Prostate gland (tissue), 2 donors: ENCODE measurements at regions of chr15 and their contacts with region 1.

Region 1: DNA sequence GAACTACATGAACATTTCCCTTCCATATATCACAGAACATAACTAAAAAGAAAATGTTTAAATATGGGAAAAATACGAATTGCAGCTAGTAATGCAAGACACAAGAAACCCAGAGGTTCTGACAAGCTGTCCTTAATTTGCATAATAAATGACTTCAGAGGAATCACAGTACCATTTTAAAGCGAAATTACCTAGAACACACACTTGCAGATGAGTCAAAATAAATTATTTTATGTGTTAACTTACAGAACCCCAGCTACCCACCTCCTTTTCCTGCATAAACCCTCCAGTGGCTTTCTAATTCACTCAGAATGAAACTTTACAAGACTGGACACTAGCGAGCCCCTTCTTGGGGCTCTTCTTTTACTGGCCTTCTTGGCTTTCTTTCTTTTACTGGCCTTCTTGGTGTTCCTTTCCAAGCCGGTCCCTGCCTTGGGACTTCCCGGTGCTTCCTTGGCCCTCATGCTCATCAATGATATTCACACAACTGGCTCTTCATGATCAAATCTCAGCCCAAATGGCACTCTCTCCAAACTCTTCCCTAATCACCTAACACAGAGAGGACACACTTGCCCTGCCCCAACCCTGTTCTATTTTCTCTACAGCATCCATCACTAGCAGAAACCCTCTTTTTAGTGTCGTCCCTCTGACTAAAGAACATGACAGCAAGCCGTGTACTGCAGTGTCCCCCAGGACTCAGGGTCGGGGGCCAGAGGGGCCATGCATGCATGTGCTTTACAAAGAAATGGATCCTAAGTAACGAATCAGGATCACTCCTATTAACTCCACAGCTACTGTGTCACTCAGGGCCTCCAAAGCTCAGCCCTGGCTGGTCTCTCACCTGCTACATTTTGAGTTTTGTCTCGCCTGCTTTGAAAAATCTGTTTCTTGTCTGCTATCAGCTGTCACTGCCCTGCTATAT is 4.8 kb downstream of the CHSY1 start:
- DNase-seq: no peak
- H3K4me3 ChIP-seq: no peak overlapping the region
- H3K27ac ChIP-seq: peak overlapping the region; percentile 49 to 64
- H3K4me1 ChIP-seq: peaks cover 37% of the 10 kb centered on the region
- H3K27me3 ChIP-seq: no peaks in the 10 kb centered on the region
- CTCF ChIP-seq: no peak
- POLR2A ChIP-seq: no peak

Region 2: DNA sequence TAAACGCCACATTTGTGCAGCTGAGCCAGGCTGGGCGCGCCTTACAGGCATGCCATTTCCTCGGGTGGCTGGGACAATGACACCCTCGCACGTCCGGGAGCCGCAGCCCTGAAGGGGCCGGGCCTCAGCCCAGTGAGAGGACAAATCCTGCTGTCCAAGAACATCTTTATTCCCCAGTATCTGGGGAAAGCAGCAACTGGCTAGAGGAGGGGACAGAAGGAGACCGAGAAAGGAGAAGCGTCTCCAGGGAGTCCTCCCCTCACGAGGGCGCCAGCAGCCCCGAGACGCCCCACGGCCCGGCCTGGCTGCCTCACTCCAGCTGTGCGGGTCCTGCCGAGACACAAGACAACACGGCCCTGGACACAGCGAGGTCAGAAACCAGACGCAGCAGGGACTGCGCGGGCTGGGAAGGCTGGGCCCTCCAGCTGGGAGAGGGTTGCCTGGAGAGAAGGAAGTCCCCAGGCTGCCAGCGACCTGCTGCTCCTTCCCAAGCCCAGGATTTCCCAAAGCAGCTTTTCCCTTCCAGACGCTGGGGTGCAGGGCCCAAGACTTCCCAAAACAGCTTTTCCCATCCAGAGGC is 125.5 kb before region 1 on chr15:
- intact Hi-C with region 1: loop called (anchors 5 kb)
- DNase-seq: peak; percentile 58
- H3K4me3 ChIP-seq: peak overlapping the region; percentile 0 to 6
- H3K27ac ChIP-seq: peak overlapping the region; percentile 47 to 72
- H3K4me1 ChIP-seq: no peaks in the 10 kb centered on the region
- H3K27me3 ChIP-seq: no peaks in the 10 kb centered on the region
- CTCF ChIP-seq: peak in 3 of 4 experiments; percentile 14 to 37 (median 33)
- POLR2A ChIP-seq: no peak